H1 (cell line): ENCODE measurements at regions of chr17 and their contacts with region 1.

Region 1: DNA sequence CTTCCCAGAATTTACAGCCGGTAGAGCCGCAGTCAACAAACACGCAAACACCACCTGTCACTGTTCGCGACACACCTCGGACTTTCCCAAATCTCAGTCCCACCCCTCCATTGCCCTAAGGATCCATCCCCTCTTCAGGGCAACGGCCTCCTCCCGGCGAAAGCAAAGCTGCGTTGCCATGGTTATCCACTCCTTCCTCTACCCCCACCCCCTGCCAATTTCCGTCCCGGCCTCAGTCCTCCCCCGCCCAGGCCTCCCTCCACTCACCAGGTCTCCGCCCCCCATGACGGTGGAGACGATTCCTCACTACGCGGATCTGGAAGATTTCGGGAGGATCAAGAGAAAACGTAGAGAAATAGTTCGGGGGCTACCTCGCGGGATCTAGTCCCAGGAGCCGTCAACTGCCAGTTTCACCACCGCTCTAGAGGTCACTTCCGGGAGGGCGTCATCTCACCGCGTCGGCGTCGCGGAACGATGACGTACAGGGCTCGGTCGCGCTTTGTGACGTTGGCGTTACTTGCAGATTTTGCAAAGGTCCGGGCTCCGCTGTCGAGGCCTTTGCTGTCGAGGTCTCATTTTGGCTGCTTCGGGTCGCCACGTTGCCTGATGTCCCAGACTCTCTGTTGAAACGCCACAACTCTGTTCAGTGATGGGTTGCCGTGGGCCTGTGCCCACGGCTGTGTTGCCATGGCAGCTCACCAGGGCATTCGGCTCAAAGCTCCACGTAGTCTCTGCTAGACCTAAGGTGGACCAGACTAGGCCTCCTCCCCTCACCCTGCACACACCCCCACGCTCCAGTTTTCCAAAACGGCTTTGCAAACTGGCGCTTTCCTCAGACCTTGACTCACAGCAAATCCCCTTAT is at the start of gene CWC25:
- DNase-seq: peak; percentile 93 to 100
- H3K4me3 ChIP-seq: peak within 1 kb of the TSS; percentile 59 to 94 (median 91)
- H3K27ac ChIP-seq: peak within 1 kb of the TSS; percentile 99
- H3K4me1 ChIP-seq: peaks cover 0 to 3% (median 1%) of the 10 kb centered on the region in 4 experiments; a peak in 2 of 7 replicates
- H3K27me3 ChIP-seq: no peaks in the 10 kb centered on the region
- CTCF ChIP-seq: no peak
- EP300 ChIP-seq: peak in 1 of 2 experiments; percentile 97; a peak in 2 of 3 replicates
- POLR2A ChIP-seq: peak; percentile 91 to 99
- RAD21 ChIP-seq: no peak
- total RNA-seq, gene CWC25: 13.1 and 15.8 TPM in 2 replicates

Region 2: GRCh38 chr17:38783227-38783626 is 41.9 kb before region 1 on chr17:
- CTCF ChIA-PET with region 1: no interaction called
- POLR2A ChIA-PET with region 1: no interaction called
- DNase-seq: no peak
- H3K4me3 ChIP-seq: no peak overlapping the region
- H3K27ac ChIP-seq: no peak overlapping the region
- H3K4me1 ChIP-seq: no peaks in the 10 kb centered on the region
- H3K27me3 ChIP-seq: no peaks in the 10 kb centered on the region
- CTCF ChIP-seq: peak in 2 of 3 experiments; percentile 27 to 32; a peak in 3 of 4 replicates
- EP300 ChIP-seq: no peak
- POLR2A ChIP-seq: no peak
- RAD21 ChIP-seq: 0 out of 4 replicates have a peak, but pooled peaks of 1 of the 2 experiments have one; percentile 4

Region 3: DNA sequence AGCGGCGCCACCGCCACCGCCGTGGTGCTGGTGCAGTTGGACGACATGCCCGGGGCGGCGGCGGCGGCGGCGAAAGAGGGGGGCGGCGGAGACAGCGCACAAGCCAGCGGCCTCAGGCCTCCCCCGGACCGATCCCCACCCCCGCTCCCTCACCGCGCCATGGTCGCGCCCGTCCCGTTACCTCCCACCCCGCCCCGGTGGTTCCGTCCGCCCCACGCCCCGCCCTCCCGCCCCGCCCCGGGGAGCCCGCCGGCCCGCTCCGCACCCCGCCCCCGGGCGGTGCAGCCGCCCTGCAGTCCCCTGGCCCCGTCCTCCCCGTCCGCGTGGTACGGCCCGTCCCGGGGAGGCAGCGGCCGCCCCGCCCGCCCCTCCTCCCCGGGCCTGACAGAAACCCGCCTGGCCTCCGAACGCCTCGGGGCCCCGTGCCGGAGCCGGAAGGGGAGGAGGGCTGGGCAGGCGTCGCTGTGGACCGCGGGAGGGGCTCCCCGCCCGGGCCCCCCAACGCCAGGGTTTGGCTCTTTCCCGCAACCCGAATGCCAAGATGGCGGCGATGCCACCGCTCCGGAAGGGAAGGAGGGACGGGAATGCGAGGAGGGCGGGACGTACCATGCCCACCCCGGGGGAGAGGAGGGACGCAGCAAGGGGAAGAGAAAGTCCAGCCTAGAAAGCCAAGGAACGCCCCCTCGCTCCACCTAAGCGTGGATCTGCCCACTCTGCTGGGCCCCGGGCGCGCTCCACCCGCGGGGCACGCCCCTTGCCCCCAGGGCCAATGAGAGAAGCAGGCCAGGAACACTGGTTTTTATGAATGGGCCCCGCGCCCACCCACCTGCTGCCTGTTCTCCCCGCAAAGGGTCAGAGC is 25.5 kb before region 1 on chr17 and contains the start of gene PIP4K2B:
- CTCF ChIA-PET with region 1: interaction called, 4 read pairs
- POLR2A ChIA-PET with region 1: interaction called, 16 read pairs
- DNase-seq: peak; percentile 93 to 96
- H3K4me3 ChIP-seq: peak within 1 kb of the TSS; percentile 79 to 90 (median 82)
- H3K27ac ChIP-seq: peak within 1 kb of the TSS; percentile 99
- H3K4me1 ChIP-seq: peaks cover 5 to 8% (median 5%) of the 10 kb centered on the region in 4 experiments; a peak in 4 of 7 replicates
- H3K27me3 ChIP-seq: no peaks in the 10 kb centered on the region
- CTCF ChIP-seq: no peak
- EP300 ChIP-seq: peak in 1 of 2 experiments; percentile 98; a peak in 2 of 3 replicates
- POLR2A ChIP-seq: peak; percentile 83 to 86
- RAD21 ChIP-seq: no peak
- total RNA-seq, gene PIP4K2B: 57.7 and 57.8 TPM in 2 replicates

Region 4: DNA sequence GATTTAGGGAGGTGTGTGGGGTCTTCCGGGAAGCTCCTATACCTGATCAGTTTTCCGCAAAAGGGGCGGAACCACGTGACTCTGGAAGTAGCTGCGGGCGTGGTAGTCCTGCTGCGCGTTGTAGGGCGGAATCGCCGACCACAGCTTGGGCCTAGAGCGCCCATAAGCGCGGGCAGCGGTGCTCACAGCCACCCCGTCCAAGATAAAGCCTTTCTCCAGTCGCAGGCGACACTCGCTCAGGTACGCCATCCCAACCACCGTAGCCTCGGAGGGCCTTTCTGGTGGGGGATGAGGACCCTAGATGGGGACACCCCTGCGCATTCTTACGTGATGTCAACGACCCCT is 16.0 kb after region 1 on chr17:
- CTCF ChIA-PET with region 1: interaction called, 3 read pairs
- POLR2A ChIA-PET with region 1: interaction called, 337 read pairs
- DNase-seq: no peak
- H3K4me3 ChIP-seq: no peak overlapping the region
- H3K27ac ChIP-seq: no peak overlapping the region
- H3K4me1 ChIP-seq: peaks cover 0 to 5% (median 2%) of the 10 kb centered on the region in 4 experiments; a peak in 2 of 7 replicates
- H3K27me3 ChIP-seq: no peaks in the 10 kb centered on the region
- CTCF ChIP-seq: no peak
- EP300 ChIP-seq: no peak
- POLR2A ChIP-seq: no peak
- RAD21 ChIP-seq: no peak

Region 5: GRCh38 chr17:38900978-38901656 is 76.0 kb after region 1 on chr17:
- CTCF ChIA-PET with region 1: no interaction called
- POLR2A ChIA-PET with region 1: no interaction called
- DNase-seq: no peak
- H3K4me3 ChIP-seq: no peak overlapping the region
- H3K27ac ChIP-seq: no peak overlapping the region
- H3K4me1 ChIP-seq: peaks cover 0 to 5% (median 2%) of the 10 kb centered on the region in 4 experiments; a peak in 5 of 7 replicates
- H3K27me3 ChIP-seq: no peaks in the 10 kb centered on the region
- CTCF ChIP-seq: no peak
- EP300 ChIP-seq: no peak
- POLR2A ChIP-seq: no peak
- RAD21 ChIP-seq: no peak